AG04450 (cell line): ENCODE measurements at regions of chr1 and their contacts with region 1.

Region 1: GRCh38 chr1:20151906-20152598 is 12.9 kb downstream of the PLA2G2F start:
- DNase-seq: peak; percentile 33
- H3K4me3 ChIP-seq: peak overlapping the region; percentile 44
- H3K27ac ChIP-seq: no peak overlapping the region
- H3K27me3 ChIP-seq: peaks cover 11% of the 10 kb centered on the region
- CTCF ChIP-seq: peak; percentile 83

Region 2: GRCh38 chr1:19918057-19918456 is 234.0 kb before region 1 on chr1:
- CTCF ChIA-PET with region 1: interaction called, 68 read pairs
- POLR2A ChIA-PET with region 1: no interaction called
- DNase-seq: peak; percentile 60
- H3K4me3 ChIP-seq: no peak overlapping the region
- H3K27ac ChIP-seq: no peak overlapping the region
- H3K27me3 ChIP-seq: peaks cover 11% of the 10 kb centered on the region
- CTCF ChIP-seq: peak; percentile 96

Region 3: GRCh38 chr1:19974822-19975416 is 177.1 kb before region 1 on chr1:
- CTCF ChIA-PET with region 1: interaction called, 58 read pairs
- POLR2A ChIA-PET with region 1: no interaction called
- DNase-seq: peak; percentile 42
- H3K4me3 ChIP-seq: no peak overlapping the region; the same call in 1 of the 2 replicates
- H3K27ac ChIP-seq: no peak overlapping the region
- H3K27me3 ChIP-seq: peaks cover 16% of the 10 kb centered on the region
- CTCF ChIP-seq: peak; percentile 99

Region 4: DNA sequence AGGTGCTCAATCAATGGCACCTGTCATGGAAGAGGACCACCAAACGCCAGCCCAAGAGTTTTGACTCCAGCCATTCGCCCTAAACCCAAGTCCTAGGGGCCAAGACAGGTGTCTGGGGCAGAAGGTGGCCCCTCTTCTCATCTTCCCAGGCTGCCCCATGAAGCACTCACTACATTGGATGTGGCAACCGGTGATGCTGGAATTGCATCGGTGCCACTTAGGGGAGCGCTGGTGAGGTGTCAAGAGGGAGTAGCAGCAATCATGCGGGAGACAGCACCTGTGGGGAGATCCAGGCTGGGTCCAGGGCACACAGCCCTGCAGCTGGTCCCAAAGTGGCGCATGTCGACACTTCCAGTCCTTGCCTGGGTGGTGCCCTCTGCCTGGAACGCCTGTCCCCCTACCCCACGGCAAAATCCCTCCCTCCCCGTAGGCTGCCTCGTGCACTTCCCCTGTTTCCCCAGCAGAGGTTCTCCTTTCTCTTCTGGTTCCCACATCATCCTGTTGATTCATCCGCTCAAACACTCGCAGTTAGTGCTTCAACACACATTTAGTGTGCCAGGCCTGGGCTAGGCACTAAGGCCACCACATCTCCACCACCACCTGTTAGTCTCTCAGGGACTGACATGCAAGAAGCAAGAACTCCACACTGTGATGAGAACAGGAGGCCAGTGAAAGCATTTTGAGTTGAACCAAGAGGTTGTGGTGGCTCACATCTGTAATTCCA is 51.3 kb before region 1 on chr1:
- CTCF ChIA-PET with region 1: interaction called, 31 read pairs
- POLR2A ChIA-PET with region 1: no interaction called
- DNase-seq: peak; percentile 11
- H3K4me3 ChIP-seq: no peak overlapping the region
- H3K27ac ChIP-seq: no peak overlapping the region
- H3K27me3 ChIP-seq: peaks cover 17% of the 10 kb centered on the region
- CTCF ChIP-seq: peak; percentile 78

Region 5: GRCh38 chr1:20165522-20165951 is 13.5 kb after region 1 on chr1:
- CTCF ChIA-PET with region 1: interaction called, 25 read pairs
- POLR2A ChIA-PET with region 1: no interaction called
- DNase-seq: no peak
- H3K4me3 ChIP-seq: no peak overlapping the region
- H3K27ac ChIP-seq: no peak overlapping the region
- H3K27me3 ChIP-seq: peaks cover 32% of the 10 kb centered on the region
- CTCF ChIP-seq: peak; percentile 40

Region 6: GRCh38 chr1:20178634-20179370 is 26.8 kb after region 1 on chr1:
- CTCF ChIA-PET with region 1: interaction called, 10 read pairs
- POLR2A ChIA-PET with region 1: no interaction called
- DNase-seq: no peak
- H3K4me3 ChIP-seq: no peak overlapping the region
- H3K27ac ChIP-seq: no peak overlapping the region
- H3K27me3 ChIP-seq: peaks cover 23% of the 10 kb centered on the region
- CTCF ChIP-seq: no peak

Region 7: DNA sequence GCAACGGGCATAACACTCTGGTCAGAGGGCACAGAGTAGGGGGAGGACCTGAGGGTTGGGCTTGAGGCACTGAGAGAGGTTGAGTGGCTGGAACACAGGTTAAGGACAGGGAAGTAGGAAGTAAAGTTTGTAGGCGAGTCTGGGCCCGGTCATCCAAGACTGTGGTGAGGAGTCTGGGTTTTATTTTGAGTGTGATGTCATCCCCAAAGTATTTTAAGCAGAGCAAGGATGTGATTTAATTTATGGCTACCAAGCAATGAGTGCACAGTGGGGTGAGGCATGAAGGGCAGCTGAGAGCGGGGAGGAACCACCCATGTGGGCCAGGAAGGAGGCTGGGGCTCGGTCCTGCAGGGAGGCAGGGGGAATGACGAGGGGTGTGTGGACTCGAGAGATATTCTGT is 127.5 kb after region 1 on chr1:
- CTCF ChIA-PET with region 1: no interaction called
- POLR2A ChIA-PET with region 1: no interaction called
- DNase-seq: no peak
- H3K4me3 ChIP-seq: no peak overlapping the region
- H3K27ac ChIP-seq: no peak overlapping the region
- H3K27me3 ChIP-seq: peaks cover 3% of the 10 kb centered on the region
- CTCF ChIP-seq: no peak